Thyroid gland (tissue), 4 donors: ENCODE measurements at regions of chr15 and their contacts with region 1.

Region 1: GRCh38 chr15:88904624-88905327 is 8.4 kb downstream of the MFGE8 start:
- DNase-seq: peak; percentile 80 to 82
- H3K4me3 ChIP-seq: no peak overlapping the region
- H3K27ac ChIP-seq: no peak overlapping the region
- H3K4me1 ChIP-seq: peaks cover 3 to 7% of the 10 kb centered on the region in 2 donors
- H3K27me3 ChIP-seq: no peaks in the 10 kb centered on the region
- CTCF ChIP-seq: peak; percentile 89 to 99 (median 95)
- POLR2A ChIP-seq: no peak

Region 2: GRCh38 chr15:89017370-89018066 is 112.7 kb after region 1 on chr15:
- intact Hi-C with region 1: loop called (anchors 10 kb)
- DNase-seq: peak; percentile 67 to 85
- H3K4me3 ChIP-seq: peak overlapping the region in 1 of 3 donors; percentile 9
- H3K27ac ChIP-seq: peak overlapping the region; percentile 25 to 66 (median 45)
- H3K4me1 ChIP-seq: peaks cover 21 to 53% of the 10 kb centered on the region in 2 donors
- H3K27me3 ChIP-seq: no peaks in the 10 kb centered on the region
- CTCF ChIP-seq: peak; percentile 30 to 76 (median 50)
- POLR2A ChIP-seq: no peak

Region 3: DNA sequence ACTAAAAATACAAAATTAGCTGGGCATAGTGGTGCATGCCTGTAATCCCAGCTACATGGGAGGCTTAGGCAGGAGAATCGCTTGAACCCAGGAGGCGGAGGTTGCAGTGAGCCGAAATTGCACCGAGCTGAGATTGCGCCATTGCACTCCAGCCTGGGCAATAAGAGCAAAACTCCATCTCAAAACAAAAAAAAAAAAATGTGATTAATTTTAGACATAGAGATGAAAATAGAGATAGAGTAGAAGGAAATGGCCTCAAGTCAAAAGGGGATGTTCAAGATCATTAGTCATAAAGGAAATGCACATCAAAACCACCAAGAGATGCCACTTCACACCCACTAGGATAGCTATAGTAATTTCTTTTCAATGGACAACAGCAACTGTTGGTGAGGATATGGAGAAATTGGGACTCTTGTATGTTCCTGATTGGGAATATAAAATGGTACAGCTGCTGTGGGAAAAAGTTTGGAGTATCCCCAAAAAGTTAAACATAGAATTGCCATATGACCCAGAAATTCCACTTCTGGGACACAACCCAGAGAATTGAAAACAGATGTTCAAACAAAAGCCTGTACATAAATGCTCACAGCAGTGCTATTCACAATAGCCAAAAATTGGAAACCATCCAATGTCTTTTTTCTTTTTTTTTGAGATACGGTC is 238.9 kb after region 1 on chr15:
- intact Hi-C with region 1: no loop called
- DNase-seq: no peak
- H3K4me3 ChIP-seq: no peak overlapping the region
- H3K27ac ChIP-seq: peak overlapping the region in 2 of 3 donors; percentile 14 to 56
- H3K4me1 ChIP-seq: peaks cover 10 to 24% of the 10 kb centered on the region in 2 donors
- H3K27me3 ChIP-seq: no peaks in the 10 kb centered on the region
- CTCF ChIP-seq: no peak
- POLR2A ChIP-seq: no peak

Region 4: DNA sequence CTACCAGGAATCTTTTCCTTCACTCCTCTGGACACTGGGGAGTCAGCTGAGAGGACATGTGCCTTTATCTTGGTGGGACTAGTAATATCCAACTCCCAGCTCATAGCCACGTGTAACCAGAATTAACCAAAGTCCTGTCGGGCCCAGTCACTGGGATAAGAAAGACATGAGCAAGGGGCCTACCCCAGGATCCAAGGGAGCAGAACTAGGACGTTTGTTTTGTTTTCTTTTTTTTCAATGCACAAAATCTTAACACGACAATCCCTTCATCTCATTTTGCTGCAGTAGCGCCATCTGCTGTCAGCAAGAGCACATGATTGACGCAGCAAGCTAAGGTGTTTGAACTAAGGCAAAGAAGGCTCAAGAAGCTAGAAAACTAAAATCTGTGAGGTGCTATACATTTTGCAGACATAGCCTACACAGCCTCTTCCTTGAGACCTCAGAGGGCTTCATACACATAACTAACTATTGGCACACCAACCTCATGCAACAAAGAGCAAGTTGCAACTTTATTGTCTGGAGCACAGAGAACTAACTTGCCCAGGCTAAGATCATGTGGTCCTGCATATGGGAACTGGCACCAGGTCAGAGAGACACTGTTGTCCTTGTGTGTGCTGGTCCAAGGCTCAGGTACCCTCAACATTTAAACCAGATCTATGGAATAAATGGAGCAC is 273.0 kb after region 1 on chr15:
- intact Hi-C with region 1: loop called (anchors 5 kb)
- DNase-seq: peak; percentile 63 to 71
- H3K4me3 ChIP-seq: no peak overlapping the region
- H3K27ac ChIP-seq: no peak overlapping the region
- H3K4me1 ChIP-seq: peaks cover 0 to 5% of the 10 kb centered on the region in 2 donors
- H3K27me3 ChIP-seq: no peaks in the 10 kb centered on the region
- CTCF ChIP-seq: peak; percentile 37 to 83 (median 80)
- POLR2A ChIP-seq: no peak